ENCODE measurements at regions of chr9 and their contacts with region 1.

Region 1: DNA sequence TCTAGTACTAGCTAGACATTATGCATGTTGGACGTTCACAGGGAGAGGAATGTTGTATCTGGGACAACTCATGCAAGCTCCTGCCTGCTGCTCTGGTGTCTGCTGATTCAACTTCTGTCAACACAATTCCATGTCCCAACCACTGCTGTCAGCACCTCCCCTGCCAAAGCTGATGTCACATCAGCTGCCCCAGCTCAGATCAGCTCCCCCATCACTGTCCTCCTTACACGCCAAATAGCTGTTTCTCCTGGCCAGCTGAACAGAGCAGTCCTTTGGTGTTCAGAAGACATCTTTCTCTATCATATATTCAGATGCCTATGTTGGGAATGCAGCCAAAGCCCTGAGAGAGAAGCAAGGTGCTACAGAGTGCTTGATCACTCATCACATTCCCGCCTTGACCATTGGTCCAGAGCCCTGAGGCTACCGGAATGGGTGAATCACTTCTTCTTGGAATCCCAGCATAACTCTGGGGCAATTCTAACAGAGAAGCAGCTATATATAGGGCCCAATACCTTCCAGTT is 223.3 kb downstream of the SEC61B start:
- DNase-seq: peak; percentile 90

Region 2: DNA sequence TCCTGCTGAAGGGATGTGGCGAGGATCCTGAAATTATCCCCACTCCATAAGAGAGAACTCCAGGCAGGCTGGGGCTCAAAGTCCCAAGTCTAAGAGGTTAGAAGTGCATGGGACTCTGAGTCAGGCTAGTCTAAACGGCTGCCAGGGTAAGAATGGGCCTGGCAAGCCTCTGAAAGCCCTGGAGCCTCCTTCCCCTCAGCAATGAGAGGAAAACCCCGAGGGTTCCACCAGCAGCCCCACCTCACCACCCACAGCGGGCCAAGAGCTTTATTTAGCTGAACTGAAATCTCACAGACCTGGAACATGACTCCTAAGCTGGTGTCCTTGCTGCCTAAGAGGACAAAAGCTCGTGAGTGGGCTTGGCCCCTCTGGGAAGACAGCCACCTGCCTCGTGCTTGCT is 87.9 kb before region 1 on chr9:
- intact Hi-C with region 1: loop called (anchors 1 kb)
- DNase-seq: peak; percentile 84

Region 3: GRCh38 chr9:99368341-99369323 is 76.8 kb before region 1 on chr9:
- intact Hi-C with region 1: loop called (anchors 2 kb)
- DNase-seq: peak; percentile 88